Naive thymus-derived CD4-positive, alpha-beta T cell (primary cell): ENCODE measurements at regions of chr18 and their contacts with region 1.

Region 1: GRCh38 chr18:3447895-3448837 is 1.8 kb upstream of the TGIF1 start:
- DNase-seq: peak; percentile 73 to 89 (median 84)
- ATAC-seq: peak; percentile 73
- H3K4me3 ChIP-seq: peak overlapping the region; percentile 78
- H3K4me3 Mint-ChIP-seq: peak overlapping the region; percentile 85 to 97 (median 96)
- H3K27ac ChIP-seq: peak overlapping the region; percentile 96
- H3K27ac Mint-ChIP-seq: peak overlapping the region; percentile 96 to 100 (median 99)
- H3K4me1 ChIP-seq: peaks cover 13% of the 10 kb centered on the region in 2 donors
- H3K4me1 Mint-ChIP-seq: peaks cover 5 to 35% (median 23%) of the 10 kb centered on the region in 7 donors
- H3K27me3 ChIP-seq: no peaks in the 10 kb centered on the region
- H3K27me3 Mint-ChIP-seq: peaks cover 0 to 1% (median 0%) of the 10 kb centered on the region in 5 donors

Region 2: DNA sequence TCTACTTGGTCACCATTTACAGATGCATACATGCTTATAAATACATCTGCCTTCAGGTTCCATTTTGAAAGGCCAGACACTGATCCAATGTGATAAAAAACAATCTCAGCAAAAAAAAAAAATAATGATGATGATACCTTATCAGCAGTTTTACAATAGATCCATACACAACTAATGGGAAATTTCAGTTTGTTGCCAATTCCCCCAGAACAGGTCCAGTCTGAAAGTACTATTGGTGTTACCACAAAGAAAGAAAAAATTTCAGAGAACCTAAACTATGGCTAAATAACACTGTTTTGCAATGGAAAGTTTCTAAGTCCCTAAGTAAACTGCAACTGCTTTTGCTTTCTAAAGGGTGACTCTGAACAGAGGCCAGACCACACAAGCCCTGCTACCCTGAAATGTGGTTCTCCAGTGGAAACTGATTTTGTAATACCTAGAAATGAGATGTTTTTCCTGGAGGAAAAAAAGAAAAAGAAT is 489.3 kb before region 1 on chr18:
- CTCF ChIA-PET with region 1: no interaction called
- POLR2A ChIA-PET with region 1: interaction called, 3 read pairs
- intact Hi-C with region 1: loop called (anchors 2 kb)
- DNase-seq: peak in 1 of 9 donors; percentile 61
- ATAC-seq: no peak
- H3K4me3 ChIP-seq: peak overlapping the region; percentile 8
- H3K4me3 Mint-ChIP-seq: peak overlapping the region; percentile 1 to 85 (median 66)
- H3K27ac ChIP-seq: peak overlapping the region; percentile 68
- H3K27ac Mint-ChIP-seq: peak overlapping the region; percentile 96 to 100 (median 99)
- H3K4me1 ChIP-seq: peaks cover 83 to 85% of the 10 kb centered on the region in 2 donors
- H3K4me1 Mint-ChIP-seq: peaks cover 46 to 97% (median 93%) of the 10 kb centered on the region in 7 donors
- H3K27me3 ChIP-seq: no peaks in the 10 kb centered on the region
- H3K27me3 Mint-ChIP-seq: no peaks in the 10 kb centered on the region

Region 3: DNA sequence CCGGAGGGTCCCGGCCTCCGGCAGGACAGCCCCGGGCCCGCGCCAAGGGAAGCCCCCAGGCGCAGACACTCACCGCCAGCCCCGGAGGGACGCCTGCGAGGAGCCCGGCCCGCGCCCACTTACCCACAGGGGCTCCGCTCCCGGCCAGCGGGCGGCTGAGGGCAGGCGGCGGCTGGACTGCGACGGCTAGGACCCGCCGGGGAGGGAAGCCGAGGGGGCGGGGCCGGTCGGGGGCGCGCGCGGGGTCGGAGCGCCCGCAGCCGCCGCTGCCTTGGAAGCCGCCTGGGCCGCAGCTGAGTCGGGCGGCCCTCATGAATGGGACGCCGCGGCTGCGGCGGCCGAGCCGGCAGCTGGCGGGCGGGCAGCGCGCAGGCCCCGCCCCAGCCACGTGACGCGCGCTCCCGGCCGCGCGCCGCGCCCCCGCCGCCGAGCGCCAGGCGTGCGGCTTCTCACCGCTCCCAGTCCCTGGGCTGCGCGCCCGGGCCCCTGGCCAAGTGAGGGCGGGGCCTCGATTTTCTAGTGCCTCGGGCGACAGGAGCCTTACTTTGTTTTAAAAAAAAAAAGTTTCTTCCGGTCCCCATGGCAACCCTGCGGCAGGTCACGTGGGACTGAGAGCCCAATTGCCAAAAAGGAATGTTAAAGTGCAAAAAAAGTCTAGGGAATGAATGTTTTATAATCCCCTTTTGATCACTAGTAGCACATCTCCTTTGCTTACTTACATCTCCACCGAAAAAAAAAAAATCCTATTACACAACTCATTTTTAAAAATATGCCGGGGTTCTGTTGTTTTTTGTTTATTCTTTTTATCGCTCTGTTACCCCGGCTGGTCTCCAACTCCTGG is 435.0 kb before region 1 on chr18 and contains the start of gene LPIN2:
- CTCF ChIA-PET with region 1: no interaction called
- POLR2A ChIA-PET with region 1: interaction called, 3 read pairs
- intact Hi-C with region 1: loop called (anchors 2 kb)
- DNase-seq: peak; percentile 96 to 98 (median 98)
- ATAC-seq: peak; percentile 92
- H3K4me3 ChIP-seq: peak within 1 kb of the TSS; percentile 61
- H3K4me3 Mint-ChIP-seq: peak within 1 kb of the TSS; percentile 93 to 99 (median 95)
- H3K27ac ChIP-seq: peak within 1 kb of the TSS; percentile 84
- H3K27ac Mint-ChIP-seq: peak within 1 kb of the TSS; percentile 91 to 98 (median 95)
- H3K4me1 ChIP-seq: peaks cover 8 to 61% of the 10 kb centered on the region in 2 donors
- H3K4me1 Mint-ChIP-seq: peaks cover 56 to 79% (median 74%) of the 10 kb centered on the region in 7 donors
- H3K27me3 ChIP-seq: no peaks in the 10 kb centered on the region
- H3K27me3 Mint-ChIP-seq: no peaks in the 10 kb centered on the region
- total RNA-seq, gene LPIN2: 58.8 to 133 (median 73.6) TPM

Region 4: GRCh38 chr18:3321133-3321812 is 126.9 kb before region 1 on chr18:
- CTCF ChIA-PET with region 1: interaction called, 6 read pairs
- POLR2A ChIA-PET with region 1: no interaction called
- intact Hi-C with region 1: loop called in 1 of 2 experiments (anchors 5 kb)
- DNase-seq: no peak
- ATAC-seq: no peak
- H3K4me3 ChIP-seq: no peak overlapping the region
- H3K4me3 Mint-ChIP-seq: no peak overlapping the region
- H3K27ac ChIP-seq: no peak overlapping the region
- H3K27ac Mint-ChIP-seq: no peak overlapping the region
- H3K4me1 ChIP-seq: no peaks in the 10 kb centered on the region
- H3K4me1 Mint-ChIP-seq: peaks cover 0 to 8% (median 0%) of the 10 kb centered on the region in 7 donors
- H3K27me3 ChIP-seq: no peaks in the 10 kb centered on the region
- H3K27me3 Mint-ChIP-seq: peaks cover 4 to 13% (median 6%) of the 10 kb centered on the region in 5 donors

Region 5: GRCh38 chr18:3593904-3594661 is 145.9 kb after region 1 on chr18:
- CTCF ChIA-PET with region 1: interaction called, 9 read pairs
- POLR2A ChIA-PET with region 1: interaction called, 109 read pairs
- intact Hi-C with region 1: loop called (anchors 1 kb)
- DNase-seq: peak; percentile 71 to 96 (median 93)
- ATAC-seq: peak; percentile 82
- H3K4me3 ChIP-seq: peak overlapping the region; percentile 73
- H3K4me3 Mint-ChIP-seq: peak overlapping the region; percentile 84 to 97 (median 93)
- H3K27ac ChIP-seq: peak overlapping the region; percentile 89
- H3K27ac Mint-ChIP-seq: peak overlapping the region; percentile 98 to 100 (median 99)
- H3K4me1 ChIP-seq: peaks cover 31 to 40% of the 10 kb centered on the region in 2 donors
- H3K4me1 Mint-ChIP-seq: peaks cover 32 to 66% (median 57%) of the 10 kb centered on the region in 7 donors
- H3K27me3 ChIP-seq: no peaks in the 10 kb centered on the region
- H3K27me3 Mint-ChIP-seq: no peaks in the 10 kb centered on the region

Region 6: DNA sequence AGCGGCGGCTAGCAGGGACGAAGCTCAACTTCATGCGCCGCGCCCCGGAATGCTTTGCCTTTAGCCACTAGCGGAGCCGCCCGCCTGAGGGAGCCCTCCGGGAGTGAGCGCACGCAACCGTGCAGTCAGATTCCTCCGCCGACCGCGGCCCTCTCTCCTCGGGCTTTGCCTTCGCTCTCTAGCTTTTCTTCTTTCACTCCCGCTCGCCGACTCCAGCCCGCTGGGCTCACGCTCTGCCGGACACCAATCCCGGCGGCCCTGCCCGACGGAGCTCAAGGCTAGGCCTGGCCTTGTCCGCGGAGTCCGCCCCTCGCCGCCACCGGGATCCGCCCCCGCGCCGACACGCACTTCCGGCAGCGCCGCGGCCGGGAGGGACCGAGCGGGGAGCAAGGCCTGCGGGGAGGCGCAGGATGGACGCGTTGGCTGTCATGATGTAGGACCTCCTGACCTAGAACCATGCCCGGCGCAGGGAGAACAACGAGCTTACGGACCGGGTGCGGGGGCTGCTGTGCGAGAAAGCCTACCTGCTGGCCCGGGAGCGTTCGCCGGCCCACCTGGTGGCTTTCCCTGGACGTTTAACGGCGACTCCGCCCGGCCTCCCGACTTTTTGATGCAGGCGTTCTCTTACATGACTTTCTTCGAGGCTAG is 1789.7 kb after region 1 on chr18:
- CTCF ChIA-PET with region 1: no interaction called
- POLR2A ChIA-PET with region 1: interaction called, 5 read pairs
- intact Hi-C with region 1: loop called in 1 of 2 experiments (anchors 5 kb)
- DNase-seq: peak; percentile 81 to 97 (median 92)
- ATAC-seq: peak; percentile 93
- H3K4me3 ChIP-seq: peak overlapping the region; percentile 89
- H3K4me3 Mint-ChIP-seq: peak overlapping the region; percentile 93 to 98 (median 96)
- H3K27ac ChIP-seq: peak overlapping the region; percentile 90
- H3K27ac Mint-ChIP-seq: peak overlapping the region; percentile 97 to 99 (median 98)
- H3K4me1 ChIP-seq: peaks cover 13 to 16% of the 10 kb centered on the region in 2 donors
- H3K4me1 Mint-ChIP-seq: peaks cover 16 to 76% (median 45%) of the 10 kb centered on the region in 7 donors
- H3K27me3 ChIP-seq: no peaks in the 10 kb centered on the region
- H3K27me3 Mint-ChIP-seq: peaks cover 0 to 7% (median 0%) of the 10 kb centered on the region in 5 donors